Vagina (tissue), 2 donors: ENCODE measurements at regions of chr3 and their contacts with region 1.

Region 1: DNA sequence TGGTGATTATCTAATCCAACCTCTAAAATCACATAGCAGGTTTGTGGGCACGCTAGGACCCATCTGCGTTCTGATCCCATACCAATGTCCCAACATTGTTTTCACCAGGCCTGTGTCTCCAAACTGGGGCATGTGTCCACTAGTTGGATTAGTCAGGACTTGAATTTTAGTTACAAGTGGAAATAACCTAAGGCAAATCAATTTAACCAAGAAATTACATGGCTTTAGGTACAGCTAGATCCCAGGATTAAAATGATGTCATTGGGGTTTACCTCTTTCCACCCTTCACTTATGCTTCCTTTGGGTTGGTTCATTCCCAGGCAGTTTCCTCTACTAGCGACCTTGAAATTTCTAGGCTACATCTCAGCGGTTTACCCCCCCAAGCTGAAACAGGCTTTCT is 47.2 kb upstream of the PXYLP1 start:
- DNase-seq: no peak
- H3K4me3 ChIP-seq: no peak overlapping the region
- H3K27ac ChIP-seq: no peak overlapping the region
- H3K4me1 ChIP-seq: no peaks in the 10 kb centered on the region
- H3K27me3 ChIP-seq: no peaks in the 10 kb centered on the region
- CTCF ChIP-seq: no peak
- POLR2A ChIP-seq: no peak

Region 2: DNA sequence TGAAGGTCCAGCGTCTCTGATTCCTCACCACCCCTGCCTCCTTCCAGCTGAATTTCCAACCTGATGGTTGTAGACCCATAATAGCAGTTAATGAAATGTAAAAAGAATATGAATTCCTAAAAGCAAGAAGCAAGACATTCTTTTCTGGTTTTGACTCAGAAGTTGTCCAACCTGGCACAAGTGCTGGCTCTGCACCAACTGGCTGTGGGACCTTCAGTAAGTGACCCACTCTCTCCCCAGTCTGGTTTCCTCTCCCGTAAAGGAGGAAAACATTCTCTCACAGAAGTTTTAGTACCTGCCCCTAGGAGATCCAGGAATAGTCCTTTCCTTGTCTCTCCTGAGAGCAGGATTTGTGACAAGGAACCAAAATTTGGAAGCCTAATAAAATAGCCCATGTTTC is 743.4 kb before region 1 on chr3:
- intact Hi-C with region 1: no loop called
- DNase-seq: no peak
- H3K4me3 ChIP-seq: no peak overlapping the region
- H3K27ac ChIP-seq: no peak overlapping the region
- H3K4me1 ChIP-seq: no peaks in the 10 kb centered on the region
- H3K27me3 ChIP-seq: no peaks in the 10 kb centered on the region
- CTCF ChIP-seq: no peak
- POLR2A ChIP-seq: no peak

Region 3: GRCh38 chr3:141105828-141106628 is 78.4 kb before region 1 on chr3:
- intact Hi-C with region 1: loop called (anchors 10 kb)
- DNase-seq: no peak
- H3K4me3 ChIP-seq: no peak overlapping the region
- H3K27ac ChIP-seq: no peak overlapping the region
- H3K4me1 ChIP-seq: no peaks in the 10 kb centered on the region
- H3K27me3 ChIP-seq: no peaks in the 10 kb centered on the region
- CTCF ChIP-seq: peak; percentile 54 to 77 (median 67)
- POLR2A ChIP-seq: no peak

Region 4: GRCh38 chr3:142226484-142226883 is 1042.1 kb after region 1 on chr3:
- intact Hi-C with region 1: no loop called
- DNase-seq: no peak
- H3K4me3 ChIP-seq: no peak overlapping the region
- H3K27ac ChIP-seq: no peak overlapping the region
- H3K4me1 ChIP-seq: peaks cover 23% of the 10 kb centered on the region
- H3K27me3 ChIP-seq: no peaks in the 10 kb centered on the region
- CTCF ChIP-seq: no peak
- POLR2A ChIP-seq: no peak

Region 5: GRCh38 chr3:142279965-142280590 is 1095.6 kb after region 1 on chr3:
- intact Hi-C with region 1: no loop called
- DNase-seq: peak in 1 of 2 donors; percentile 89
- H3K4me3 ChIP-seq: no peak overlapping the region
- H3K27ac ChIP-seq: no peak overlapping the region
- H3K4me1 ChIP-seq: no peaks in the 10 kb centered on the region
- H3K27me3 ChIP-seq: no peaks in the 10 kb centered on the region
- CTCF ChIP-seq: peak; percentile 62 to 69 (median 64)
- POLR2A ChIP-seq: no peak